ENCODE measurements at regions of chr11 and their contacts with region 1.

Region 1: GRCh38 chr11:36289226-36289852 is at the start of gene COMMD9:
- DNase-seq: peak; percentile 98
- H3K4me3 Mint-ChIP-seq: peak within 1 kb of the TSS; percentile 91
- H3K27ac Mint-ChIP-seq: peak within 1 kb of the TSS; percentile 87
- H3K4me1 Mint-ChIP-seq: peaks cover 26% of the 10 kb centered on the region
- H3K27me3 Mint-ChIP-seq: no peaks in the 10 kb centered on the region
- total RNA-seq, gene COMMD9: 39.0 and 42.3 TPM in 2 replicates

Region 2: DNA sequence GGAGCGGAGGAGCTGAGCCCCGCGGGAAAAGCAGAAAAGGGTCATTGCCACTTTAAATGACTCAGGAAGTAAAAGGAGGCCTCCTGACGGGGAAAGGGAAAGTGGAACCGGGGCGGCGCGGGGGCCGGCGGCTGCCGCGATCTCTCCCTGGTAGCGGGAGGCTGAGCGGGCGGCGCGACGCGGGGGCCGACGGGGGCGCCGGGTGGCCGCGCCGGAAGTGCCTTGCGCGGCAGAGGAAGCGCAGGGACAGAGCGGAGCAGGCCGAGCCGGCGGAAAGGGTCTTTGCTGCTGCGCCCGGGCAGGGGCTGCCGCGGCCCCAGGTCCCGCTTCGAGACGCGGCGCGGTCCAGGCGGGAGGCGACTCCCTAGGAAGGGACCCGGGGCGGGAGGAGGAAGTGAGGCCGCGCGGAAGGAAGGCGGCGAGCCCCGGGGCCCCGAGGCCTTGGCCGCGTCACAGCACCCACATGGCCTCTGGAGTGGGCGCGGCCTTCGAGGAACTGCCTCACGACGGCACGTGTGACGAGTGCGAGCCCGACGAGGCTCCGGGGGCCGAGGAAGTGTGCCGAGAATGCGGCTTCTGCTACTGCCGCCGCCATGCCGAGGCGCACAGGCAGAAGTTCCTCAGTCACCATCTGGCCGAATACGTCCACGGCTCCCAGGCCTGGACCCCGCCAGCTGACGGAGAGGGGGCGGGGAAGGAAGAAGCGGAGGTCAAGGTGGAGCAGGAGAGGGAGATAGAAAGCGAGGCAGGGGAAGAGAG is 626.5 kb before region 1 on chr11 and contains the start of gene TRIM44:
- intact Hi-C with region 1: loop called (anchors 2 kb)
- DNase-seq: peak; percentile 95
- H3K4me3 Mint-ChIP-seq: peak within 1 kb of the TSS; percentile 95
- H3K27ac Mint-ChIP-seq: peak within 1 kb of the TSS; percentile 93
- H3K4me1 Mint-ChIP-seq: peaks cover 32% of the 10 kb centered on the region
- H3K27me3 Mint-ChIP-seq: peaks cover 16% of the 10 kb centered on the region
- total RNA-seq, gene TRIM44: 27.3 and 27.8 TPM in 2 replicates

Region 3: DNA sequence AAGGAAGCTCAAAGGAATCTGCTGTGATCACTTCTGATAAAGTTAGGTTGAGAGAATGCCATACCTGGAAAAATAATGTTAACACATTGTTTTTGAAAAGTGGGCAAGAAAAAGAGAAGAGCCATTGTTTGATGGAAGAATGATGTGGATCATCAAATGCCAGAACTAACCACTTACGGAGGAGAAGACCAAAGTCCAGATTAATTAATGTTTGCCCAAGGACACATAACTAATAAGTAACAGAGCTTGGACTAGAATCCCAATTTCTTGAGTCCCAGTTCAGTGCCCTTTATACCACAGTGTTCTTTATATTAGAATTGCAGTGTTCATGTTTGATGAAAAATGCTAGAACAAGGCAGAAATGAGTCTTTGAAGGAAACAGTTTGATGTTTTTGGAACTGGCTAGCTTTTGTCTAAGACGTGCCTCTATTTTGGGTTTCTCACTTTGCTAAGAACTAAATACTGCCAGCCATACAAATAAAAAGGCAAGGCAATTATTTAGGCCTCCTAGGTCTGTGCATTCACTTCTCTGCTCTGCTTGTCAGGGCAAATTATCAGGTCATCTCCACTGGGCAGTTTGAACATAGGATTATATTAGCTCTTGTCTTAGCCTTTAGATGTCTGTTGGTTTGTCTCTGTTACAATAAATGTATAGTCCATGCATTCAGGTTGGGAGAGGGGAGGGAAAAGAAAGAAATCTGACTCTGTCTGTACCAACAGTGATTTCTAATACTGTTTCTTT is 554.5 kb before region 1 on chr11:
- intact Hi-C with region 1: no loop called
- DNase-seq: no peak
- H3K4me3 Mint-ChIP-seq: no peak overlapping the region
- H3K27ac Mint-ChIP-seq: no peak overlapping the region
- H3K4me1 Mint-ChIP-seq: no peaks in the 10 kb centered on the region
- H3K27me3 Mint-ChIP-seq: no peaks in the 10 kb centered on the region

Region 4: GRCh38 chr11:36492724-36493304 is 203.5 kb after region 1 on chr11:
- intact Hi-C with region 1: loop called (anchors 1 kb)
- DNase-seq: peak; percentile 79
- H3K4me3 Mint-ChIP-seq: no peak overlapping the region
- H3K27ac Mint-ChIP-seq: no peak overlapping the region
- H3K4me1 Mint-ChIP-seq: peaks cover 16% of the 10 kb centered on the region
- H3K27me3 Mint-ChIP-seq: no peaks in the 10 kb centered on the region

Region 5: DNA sequence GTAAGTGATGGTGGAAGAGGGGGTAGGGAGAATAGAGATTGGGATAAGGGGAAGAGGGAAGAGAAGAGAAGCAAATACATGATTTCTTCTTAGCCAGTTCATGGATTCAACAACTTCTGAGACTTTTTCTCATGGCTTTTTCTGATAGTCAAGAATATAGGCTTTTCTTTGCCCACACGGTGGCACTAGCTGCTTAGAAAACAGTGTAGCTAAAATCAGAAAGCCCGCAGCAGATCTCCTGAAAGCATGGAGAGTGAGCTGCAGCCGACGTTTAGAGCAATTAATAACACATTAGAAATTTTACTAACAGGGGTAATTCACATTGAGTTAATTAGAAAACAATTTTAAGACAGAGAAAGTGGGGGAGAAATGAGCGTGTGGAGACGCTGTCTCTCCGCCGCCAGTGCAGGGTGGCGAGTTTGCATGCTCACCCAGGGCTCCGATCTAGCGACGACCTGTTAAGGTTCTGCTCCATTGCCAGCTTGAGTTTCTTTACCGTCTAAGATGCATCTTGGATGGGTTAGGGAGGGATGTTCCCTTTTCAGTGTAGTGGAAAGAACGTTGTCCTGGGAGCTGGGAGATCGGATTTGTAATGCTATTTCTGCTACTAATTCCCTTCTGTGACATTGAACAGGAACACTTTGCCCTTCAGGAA is 275.2 kb after region 1 on chr11:
- intact Hi-C with region 1: loop called (anchors 1 kb)
- DNase-seq: peak; percentile 85
- H3K4me3 Mint-ChIP-seq: peak overlapping the region; percentile 73
- H3K27ac Mint-ChIP-seq: no peak overlapping the region
- H3K4me1 Mint-ChIP-seq: peaks cover 12% of the 10 kb centered on the region
- H3K27me3 Mint-ChIP-seq: peaks cover 56% of the 10 kb centered on the region

Region 6: DNA sequence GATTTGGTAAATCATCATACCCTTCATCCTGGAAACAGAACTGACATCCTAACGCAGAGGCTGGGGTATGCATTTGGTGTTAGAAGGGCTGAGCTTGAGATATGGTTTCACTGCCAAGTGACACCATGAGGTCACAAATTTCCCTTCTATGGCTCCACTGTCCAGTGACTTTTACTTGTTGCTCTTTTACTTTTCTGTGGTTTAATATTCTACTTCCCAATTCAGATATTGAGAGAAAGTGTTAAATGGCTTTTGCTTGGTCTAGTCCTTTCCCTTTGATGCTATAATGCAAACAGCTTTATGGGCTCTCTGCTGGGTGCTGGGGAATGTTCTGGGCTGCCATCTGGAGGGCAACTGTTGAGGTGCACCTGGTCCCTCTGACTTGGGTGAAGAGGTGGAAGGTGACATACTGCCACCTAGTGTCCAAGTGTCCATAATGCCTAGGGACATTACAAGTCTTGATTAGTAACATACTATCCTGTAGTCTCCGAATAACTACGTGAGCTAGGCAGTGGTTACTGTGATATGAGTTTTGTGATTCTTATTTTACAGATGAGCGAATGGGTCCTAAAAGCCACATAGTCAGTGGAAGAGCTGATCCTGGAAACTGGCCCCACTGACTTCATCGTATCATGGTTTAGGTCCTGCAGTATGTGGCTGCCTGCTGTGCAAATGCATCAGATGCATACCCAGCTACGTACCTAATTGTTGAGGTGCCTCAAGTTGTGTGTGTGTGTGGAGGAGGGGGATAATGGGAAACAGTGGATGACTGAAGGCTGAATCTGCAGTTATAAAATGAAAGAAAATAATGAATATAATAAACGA is 457.8 kb after region 1 on chr11:
- intact Hi-C with region 1: loop called (anchors 1 kb)
- DNase-seq: peak; percentile 96
- H3K4me3 Mint-ChIP-seq: no peak overlapping the region
- H3K27ac Mint-ChIP-seq: no peak overlapping the region
- H3K4me1 Mint-ChIP-seq: peaks cover 2% of the 10 kb centered on the region
- H3K27me3 Mint-ChIP-seq: peaks cover 12% of the 10 kb centered on the region

Measured in activated CD4-positive, alpha-beta T cell treated with anti-CD3 and anti-CD28 coated beads, Interleukin-2, amount 10 ng/mL, durations not matched to agents 24 days and 14 days (primary cell).